Heart right ventricle (tissue), 16 donors: ENCODE measurements at regions of chr5 and their contacts with region 1.

Region 1: GRCh38 chr5:179516221-179516620 is 34.1 kb upstream of the RUFY1 start:
- DNase-seq: no peak
- ATAC-seq: no peak
- H3K4me3 ChIP-seq: no peak overlapping the region
- H3K27ac ChIP-seq: no peak overlapping the region
- H3K4me1 ChIP-seq: no peaks in the 10 kb centered on the region
- H3K27me3 ChIP-seq: peaks cover 0 to 28% (median 10%) of the 10 kb centered on the region in 7 donors
- CTCF ChIP-seq: no peak

Region 2: GRCh38 chr5:177958696-177959095 is 1557.5 kb before region 1 on chr5:
- intact Hi-C with region 1: loop called in 1 of 10 experiments (anchors 10 kb)
- DNase-seq: no peak
- ATAC-seq: no peak
- H3K4me3 ChIP-seq: no peak overlapping the region
- H3K27ac ChIP-seq: no peak overlapping the region
- H3K4me1 ChIP-seq: no peaks in the 10 kb centered on the region
- H3K27me3 ChIP-seq: no peaks in the 10 kb centered on the region
- CTCF ChIP-seq: no peak